A549 (cell line): ENCODE measurements at regions of chr11 and their contacts with region 1.

Region 1: DNA sequence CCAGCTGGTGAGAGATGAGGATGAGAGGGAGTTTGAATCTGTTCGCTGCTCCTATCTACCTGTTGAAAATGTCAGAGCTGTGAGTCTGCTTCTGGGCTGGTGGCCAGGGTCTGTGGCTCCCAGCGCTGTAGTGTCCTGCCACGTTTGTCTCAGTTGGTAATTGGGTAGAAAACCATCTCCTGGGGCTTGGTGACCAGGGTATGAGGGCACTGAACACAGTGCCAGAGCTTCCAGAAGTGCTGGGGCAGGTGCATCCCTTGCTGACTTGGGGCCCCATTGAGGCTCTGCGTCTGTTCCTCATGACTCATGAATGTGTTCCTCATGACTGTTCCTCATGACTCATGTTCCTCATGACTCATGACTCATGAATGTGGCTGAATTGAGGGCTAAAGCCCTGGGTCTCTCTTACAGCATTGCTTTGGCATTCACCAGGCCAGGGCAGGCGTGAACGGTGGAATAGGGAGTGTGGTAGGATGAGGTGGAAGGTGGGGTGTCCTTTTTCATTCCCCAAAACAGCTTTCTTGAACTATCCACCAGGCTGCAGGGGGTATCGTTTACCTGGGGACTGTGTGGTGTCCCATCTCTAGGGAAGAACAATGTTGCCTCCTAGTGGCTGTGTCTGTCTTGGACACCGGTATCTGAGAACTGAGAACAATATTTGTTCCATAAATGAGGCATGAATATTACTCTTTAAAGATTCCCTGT is 139.5 kb downstream of the COMMD9 start:
- DNase-seq: peak; percentile 94 to 98
- ATAC-seq: peak; percentile 95 to 98
- H3K4me3 ChIP-seq: no peak overlapping the region
- H3K27ac ChIP-seq: peak overlapping the region; percentile 84 to 89
- H3K4me1 ChIP-seq: peaks cover 44% of the 10 kb centered on the region
- CTCF ChIP-seq: peak; percentile 74
- EP300 ChIP-seq: peak; percentile 41 to 55; a peak in 2 of 5 replicates
- POLR2A ChIP-seq: no peak
- RAD21 ChIP-seq: peak; percentile 74 to 81

Region 2: DNA sequence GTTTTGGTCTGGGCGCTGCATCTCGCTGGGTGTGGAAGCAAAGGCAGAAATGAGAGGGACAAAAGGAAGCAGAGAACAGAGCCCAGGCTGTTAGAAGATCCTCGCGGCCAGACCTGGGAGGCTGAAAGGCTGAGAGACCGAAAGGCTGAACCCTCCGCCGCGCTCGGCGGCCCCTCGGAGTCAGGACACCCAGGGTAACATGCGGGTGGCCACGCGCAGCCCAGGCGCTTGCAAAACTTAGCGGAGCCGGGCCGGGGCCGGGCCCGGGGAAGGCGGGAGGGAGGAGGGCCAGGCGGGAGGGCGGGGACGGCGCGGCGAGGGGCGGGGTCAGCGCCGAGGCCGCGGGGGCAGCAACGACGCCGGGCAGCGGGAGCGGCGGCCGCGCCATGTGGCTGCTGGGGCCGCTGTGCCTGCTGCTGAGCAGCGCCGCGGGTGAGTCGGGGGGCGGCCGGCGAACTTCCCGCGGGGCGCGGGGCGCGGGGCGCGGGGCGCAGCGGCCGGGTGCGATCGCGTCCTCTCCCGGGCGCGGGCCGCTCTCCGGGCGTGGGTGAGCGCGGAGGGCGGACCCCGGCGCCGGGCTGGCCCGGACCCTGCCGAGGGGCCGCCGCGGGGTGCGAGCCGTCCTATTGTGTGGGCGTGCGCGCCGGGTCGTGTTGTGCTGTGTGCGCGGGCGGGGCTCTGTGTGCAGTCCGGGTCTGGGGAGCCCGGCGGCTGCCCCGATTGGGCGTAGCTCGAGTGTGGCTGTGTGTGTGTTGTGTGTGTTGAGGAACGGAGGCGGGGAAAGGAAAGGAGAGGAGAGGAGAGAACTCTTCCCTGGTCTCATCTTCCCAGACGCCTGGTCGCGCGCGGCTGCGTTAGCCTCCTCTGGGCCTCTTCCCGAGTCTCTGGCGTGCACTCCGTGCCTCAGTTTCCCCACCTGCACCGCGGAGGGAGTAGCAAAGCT is 205.7 kb before region 1 on chr11 and contains the start of gene LDLRAD3:
- CTCF ChIA-PET with region 1: no interaction called
- POLR2A ChIA-PET with region 1: no interaction called
- DNase-seq: peak; percentile 70 to 75
- ATAC-seq: peak; percentile 93 to 94
- H3K4me3 ChIP-seq: peak within 1 kb of the TSS; percentile 89
- H3K27ac ChIP-seq: peak within 1 kb of the TSS; percentile 92 to 98
- H3K4me1 ChIP-seq: peaks cover 16% of the 10 kb centered on the region
- CTCF ChIP-seq: no peak
- EP300 ChIP-seq: no peak
- POLR2A ChIP-seq: peak; percentile 76
- RAD21 ChIP-seq: no peak; a peak in 1 of 5 replicates
- polyA plus RNA-seq, gene LDLRAD3: 13.2 and 15.8 TPM in 2 replicates

Region 3: GRCh38 chr11:36162883-36163434 is 13.3 kb after region 1 on chr11:
- CTCF ChIA-PET with region 1: interaction called, 16 read pairs
- POLR2A ChIA-PET with region 1: no interaction called
- DNase-seq: no peak
- ATAC-seq: no peak
- H3K4me3 ChIP-seq: no peak overlapping the region
- H3K27ac ChIP-seq: no peak overlapping the region
- H3K4me1 ChIP-seq: peaks cover 7% of the 10 kb centered on the region; the same call in 1 of the 3 replicates
- CTCF ChIP-seq: no peak
- EP300 ChIP-seq: no peak
- POLR2A ChIP-seq: no peak
- RAD21 ChIP-seq: no peak